ENCODE measurements at regions of chr11 and their contacts with region 1.

Region 1: GRCh38 chr11:119018074-119018938 is at the starts of genes RPS25 and TRAPPC4:
- H3K4me3 ChIP-seq: peak within 1 kb of the TSS; percentile 63
- H3K27ac ChIP-seq: peak within 1 kb of the TSS; percentile 79
- H3K4me1 ChIP-seq: no peaks in the 10 kb centered on the region
- CTCF ChIP-seq: no peak

Region 2: GRCh38 chr11:118997627-118998387 is 20.5 kb before region 1 on chr11 and contains the start of gene CENATAC:
- CTCF ChIA-PET with region 1: interaction called, 8 read pairs
- POLR2A ChIA-PET with region 1: interaction called, 15 read pairs
- H3K4me3 ChIP-seq: peak within 1 kb of the TSS; percentile 94
- H3K27ac ChIP-seq: peak within 1 kb of the TSS; percentile 53; the same call in 1 of the 2 replicates
- H3K4me1 ChIP-seq: no peaks in the 10 kb centered on the region
- CTCF ChIP-seq: no peak

Region 3: GRCh38 chr11:119030329-119031049 is 12.2 kb after region 1 on chr11 and contains the start of gene SLC37A4:
- CTCF ChIA-PET with region 1: interaction called, 6 read pairs
- POLR2A ChIA-PET with region 1: interaction called, 10 read pairs
- H3K4me3 ChIP-seq: peak within 1 kb of the TSS; percentile 82
- H3K27ac ChIP-seq: peak within 1 kb of the TSS; percentile 83
- H3K4me1 ChIP-seq: no peaks in the 10 kb centered on the region
- CTCF ChIP-seq: peak; percentile 88

Region 4: DNA sequence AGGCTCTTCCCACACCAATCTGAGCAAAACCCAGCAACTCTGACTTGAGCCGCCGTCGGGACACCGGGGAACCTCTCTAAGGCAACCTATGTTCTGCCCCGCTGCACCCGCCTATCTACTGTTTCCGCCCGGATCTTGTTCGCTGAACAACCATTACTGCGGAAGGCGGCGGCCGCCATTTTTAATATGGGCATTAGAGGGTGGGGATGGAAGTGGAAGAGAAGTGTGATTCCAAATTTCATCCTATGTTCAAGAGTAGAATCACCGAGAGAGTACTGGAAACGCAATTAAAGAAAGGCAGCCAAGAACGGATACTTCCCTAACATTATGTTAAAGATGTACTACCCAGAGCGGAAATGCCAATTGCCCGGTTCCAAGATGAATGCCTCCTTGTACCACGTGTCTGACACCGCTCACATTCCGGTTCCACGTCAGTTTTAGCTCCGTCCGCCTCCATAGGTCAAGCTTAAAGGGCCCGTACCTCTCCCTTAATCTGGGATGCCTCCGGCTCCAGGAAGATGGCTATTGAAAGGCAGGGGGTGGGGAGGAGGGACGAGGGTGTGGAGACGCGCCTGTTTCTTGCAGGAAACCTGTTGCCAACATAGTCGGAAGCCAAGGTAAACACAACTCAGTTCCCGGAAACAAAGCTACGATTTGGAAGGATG is 83.6 kb after region 1 on chr11 and contains the start of gene DPAGT1:
- CTCF ChIA-PET with region 1: interaction called, 4 read pairs
- POLR2A ChIA-PET with region 1: interaction called, 10 read pairs
- H3K4me3 ChIP-seq: peak within 1 kb of the TSS; percentile 63
- H3K27ac ChIP-seq: peak within 1 kb of the TSS; percentile 53
- H3K4me1 ChIP-seq: no peaks in the 10 kb centered on the region
- CTCF ChIP-seq: no peak

Measured in HEK293 (cell line).